Activated CD4-positive, alpha-beta T cell treated with anti-CD3 and anti-CD28 coated beads for 36 hours (primary cell): ENCODE measurements at regions of chr2 and their contacts with region 1.

Region 1: GRCh38 chr2:126886211-126886915 is 12.3 kb upstream of the TEX51 start:
- DNase-seq: peak; percentile 83
- ATAC-seq: peak; percentile 96
- H3K4me3 Mint-ChIP-seq: no peak overlapping the region
- H3K27ac Mint-ChIP-seq: no peak overlapping the region
- H3K4me1 Mint-ChIP-seq: peaks cover 7% of the 10 kb centered on the region
- H3K27me3 Mint-ChIP-seq: peaks cover 12% of the 10 kb centered on the region

Region 2: DNA sequence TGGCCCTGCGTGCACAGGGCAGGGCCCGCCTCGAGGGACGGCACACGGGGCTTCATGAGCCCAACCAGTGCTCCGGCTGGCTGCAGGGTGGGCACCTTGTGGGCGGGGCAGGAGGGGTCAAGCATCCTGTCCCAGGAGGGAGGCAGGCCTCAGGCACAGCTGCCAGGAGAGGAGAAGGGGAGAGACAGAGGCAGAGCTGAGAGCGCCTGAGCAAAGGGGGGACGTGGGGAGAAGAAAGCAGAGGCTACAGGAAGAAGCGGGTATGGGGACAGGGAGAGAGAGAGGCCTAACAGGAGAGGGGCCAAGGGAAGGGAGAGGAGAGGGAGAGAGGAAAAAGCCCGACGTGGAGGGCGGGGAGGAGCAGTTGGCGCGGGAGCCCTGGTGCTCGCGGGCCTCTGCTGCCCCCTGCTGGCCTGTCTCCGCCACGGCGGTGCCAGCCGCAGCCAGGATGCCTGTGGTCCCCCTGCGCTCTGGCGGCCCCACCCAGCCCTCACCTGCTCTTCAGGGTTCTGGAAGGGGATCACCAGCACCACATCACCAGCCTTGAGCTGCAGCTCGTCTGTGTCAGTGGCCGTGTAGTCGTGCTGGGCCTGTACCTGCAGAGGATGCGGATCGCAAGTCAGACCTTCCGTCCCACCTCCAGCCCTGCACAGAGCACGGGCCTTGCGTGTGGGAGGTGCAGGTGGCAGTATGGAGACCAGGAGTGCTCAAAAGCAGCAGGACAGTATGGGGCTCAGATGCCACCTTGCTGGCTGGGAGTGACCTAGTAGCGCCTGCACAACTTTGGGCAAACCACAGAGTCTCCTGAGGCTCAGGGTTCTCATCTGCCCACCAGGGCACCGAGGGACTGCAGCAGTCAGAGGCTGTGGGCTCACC is 163.8 kb after region 1 on chr2:
- CTCF ChIA-PET with region 1: no interaction called
- POLR2A ChIA-PET with region 1: no interaction called
- intact Hi-C with region 1: loop called in 1 of 2 experiments (anchors 5 kb)
- DNase-seq: peak; percentile 80
- ATAC-seq: peak; percentile 81
- H3K4me3 Mint-ChIP-seq: no peak overlapping the region
- H3K27ac Mint-ChIP-seq: peak overlapping the region; percentile 31
- H3K4me1 Mint-ChIP-seq: peaks cover 2% of the 10 kb centered on the region
- H3K27me3 Mint-ChIP-seq: no peaks in the 10 kb centered on the region